Right ventricle myocardium superior (tissue), 1 donor: ENCODE measurements at regions of chr16 and their contacts with region 1.

Region 1: GRCh38 chr16:57863434-57864160 is 61.3 kb upstream of the KIFC3 start:
- DNase-seq: peak; percentile 71
- ATAC-seq: peak; percentile 91

Region 2: GRCh38 chr16:57757326-57757786 is 106.2 kb before region 1 on chr16:
- intact Hi-C with region 1: loop called (anchors 2 kb)
- DNase-seq: peak; percentile 94
- ATAC-seq: peak; percentile 94

Region 3: DNA sequence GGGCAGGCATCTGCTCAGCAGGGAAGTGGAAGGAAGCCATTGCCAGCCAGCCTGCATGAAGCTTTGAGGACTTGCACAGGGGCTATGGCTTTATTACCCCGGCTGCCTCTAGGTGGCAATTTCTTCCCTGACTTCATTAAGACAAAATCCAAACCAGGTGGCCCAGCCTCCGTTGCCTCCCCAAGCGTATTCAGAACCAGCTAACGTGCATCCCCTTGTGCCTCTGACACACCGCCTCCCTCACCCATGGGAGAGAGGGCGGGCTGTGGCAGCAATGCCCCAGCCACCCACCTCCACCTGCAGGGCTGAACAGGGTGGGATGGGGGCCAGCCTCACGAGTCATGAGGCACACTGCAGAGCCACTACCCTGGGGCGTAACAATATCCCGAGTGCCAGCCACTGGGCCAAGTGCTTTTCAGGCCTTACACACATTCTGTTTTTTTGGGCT is 68.1 kb before region 1 on chr16:
- intact Hi-C with region 1: loop called (anchors 5 kb)
- DNase-seq: no peak
- ATAC-seq: peak; percentile 12